CD8-positive, alpha-beta T cell (primary cell): ENCODE measurements at regions of chr10 and their contacts with region 1.

Region 1: GRCh38 chr10:88687853-88688467 is 18.1 kb upstream of the LIPK start:
- DNase-seq: peak in 2 of 9 experiments; percentile 24 to 43
- ATAC-seq: no peak
- H3K4me3 ChIP-seq: no peak overlapping the region
- H3K4me3 Mint-ChIP-seq: no peak overlapping the region
- H3K27ac ChIP-seq: no peak overlapping the region
- H3K27ac Mint-ChIP-seq: no peak overlapping the region
- H3K4me1 ChIP-seq: no peaks in the 10 kb centered on the region
- H3K4me1 Mint-ChIP-seq: no peaks in the 10 kb centered on the region
- H3K27me3 ChIP-seq: no peaks in the 10 kb centered on the region
- H3K27me3 Mint-ChIP-seq: peaks cover 3% of the 10 kb centered on the region
- CTCF ChIP-seq: peak; percentile 96

Region 2: DNA sequence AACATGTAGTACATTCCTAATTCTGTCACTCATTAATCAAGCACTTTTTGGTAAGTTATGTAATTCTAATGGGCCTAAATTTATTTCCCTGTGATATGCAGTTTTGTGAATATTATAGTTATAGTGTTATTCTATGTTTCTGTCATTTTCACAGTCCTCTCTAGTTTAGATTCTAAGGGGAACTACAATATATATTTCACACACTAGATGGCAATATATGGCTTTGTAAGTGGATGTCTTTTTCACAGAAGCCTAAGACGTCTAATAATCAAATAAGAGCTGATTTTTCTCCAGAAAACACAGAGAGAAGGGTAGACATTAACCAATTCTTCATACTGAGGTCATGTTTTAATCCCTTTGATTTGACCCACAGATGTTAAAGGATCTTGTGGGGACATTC is 122.9 kb before region 1 on chr10:
- CTCF ChIA-PET with region 1: no interaction called
- POLR2A ChIA-PET with region 1: no interaction called
- intact Hi-C with region 1: loop called in 1 of 2 experiments (anchors 10 kb)
- DNase-seq: peak in 2 of 9 experiments; percentile 17 to 29
- ATAC-seq: no peak
- H3K4me3 ChIP-seq: no peak overlapping the region
- H3K4me3 Mint-ChIP-seq: no peak overlapping the region
- H3K27ac ChIP-seq: no peak overlapping the region
- H3K27ac Mint-ChIP-seq: no peak overlapping the region
- H3K4me1 ChIP-seq: no peaks in the 10 kb centered on the region
- H3K4me1 Mint-ChIP-seq: peaks cover 4% of the 10 kb centered on the region
- H3K27me3 ChIP-seq: no peaks in the 10 kb centered on the region
- H3K27me3 Mint-ChIP-seq: no peaks in the 10 kb centered on the region
- CTCF ChIP-seq: peak; percentile 31

Region 3: GRCh38 chr10:88865281-88865876 is 177.4 kb after region 1 on chr10:
- CTCF ChIA-PET with region 1: interaction called, 5 read pairs
- POLR2A ChIA-PET with region 1: no interaction called
- intact Hi-C with region 1: loop called (anchors 1 to 5 kb)
- DNase-seq: peak in 2 of 9 experiments; percentile 13 to 35
- ATAC-seq: no peak
- H3K4me3 ChIP-seq: no peak overlapping the region
- H3K4me3 Mint-ChIP-seq: no peak overlapping the region
- H3K27ac ChIP-seq: no peak overlapping the region
- H3K27ac Mint-ChIP-seq: no peak overlapping the region
- H3K4me1 ChIP-seq: no peaks in the 10 kb centered on the region
- H3K4me1 Mint-ChIP-seq: no peaks in the 10 kb centered on the region
- H3K27me3 ChIP-seq: no peaks in the 10 kb centered on the region
- H3K27me3 Mint-ChIP-seq: no peaks in the 10 kb centered on the region
- CTCF ChIP-seq: no peak

Region 4: GRCh38 chr10:88913127-88913526 is 225.2 kb after region 1 on chr10:
- CTCF ChIA-PET with region 1: no interaction called
- POLR2A ChIA-PET with region 1: no interaction called
- intact Hi-C with region 1: loop called in 1 of 2 experiments (anchors 5 kb)
- DNase-seq: no peak
- ATAC-seq: no peak
- H3K4me3 ChIP-seq: no peak overlapping the region
- H3K4me3 Mint-ChIP-seq: no peak overlapping the region
- H3K27ac ChIP-seq: no peak overlapping the region
- H3K27ac Mint-ChIP-seq: no peak overlapping the region
- H3K4me1 ChIP-seq: no peaks in the 10 kb centered on the region
- H3K4me1 Mint-ChIP-seq: peaks cover 2% of the 10 kb centered on the region
- H3K27me3 ChIP-seq: no peaks in the 10 kb centered on the region
- H3K27me3 Mint-ChIP-seq: no peaks in the 10 kb centered on the region
- CTCF ChIP-seq: no peak